Activated CD8-positive, alpha-beta memory T cell treated with anti-CD3 and anti-CD28 coated beads, Interleukin-2, amount 10 ng/mL, durations not matched to agents 7 days and 5 days (primary cell): ENCODE measurements at regions of chr3 and their contacts with region 1.

Region 1: DNA sequence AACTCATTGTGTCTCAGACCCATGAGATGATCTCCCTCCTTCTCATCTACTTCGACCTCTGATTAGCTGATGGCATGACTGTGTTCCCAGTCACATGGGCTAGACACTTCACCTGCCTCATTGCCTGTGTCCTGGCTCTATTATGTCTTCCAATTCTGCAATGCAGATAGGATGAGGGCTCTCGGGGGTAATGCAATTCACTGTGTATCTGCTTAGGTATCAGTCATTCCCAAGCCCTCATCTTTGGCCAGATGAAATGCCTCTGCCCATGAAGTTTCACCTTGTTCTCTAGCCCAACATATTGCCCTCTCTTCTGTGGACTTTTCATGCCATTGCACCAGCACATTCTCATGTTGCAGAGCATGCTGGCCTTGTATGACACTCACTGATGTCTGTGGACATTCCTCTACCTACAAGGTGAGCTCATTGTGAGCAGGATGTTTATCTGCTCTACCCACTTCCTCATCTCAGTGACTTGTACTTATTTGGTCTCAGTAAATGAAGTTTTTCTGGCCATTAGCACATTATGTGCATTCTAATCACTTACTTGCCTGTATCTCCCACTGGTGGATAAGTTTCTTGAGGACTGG is 32.3 kb downstream of the MOBP start:
- DNase-seq: no peak
- ATAC-seq: no peak
- H3K4me3 Mint-ChIP-seq: no peak overlapping the region
- H3K27ac Mint-ChIP-seq: no peak overlapping the region
- H3K4me1 Mint-ChIP-seq: peaks cover 8% of the 10 kb centered on the region
- H3K27me3 Mint-ChIP-seq: peaks cover 47% of the 10 kb centered on the region

Region 2: DNA sequence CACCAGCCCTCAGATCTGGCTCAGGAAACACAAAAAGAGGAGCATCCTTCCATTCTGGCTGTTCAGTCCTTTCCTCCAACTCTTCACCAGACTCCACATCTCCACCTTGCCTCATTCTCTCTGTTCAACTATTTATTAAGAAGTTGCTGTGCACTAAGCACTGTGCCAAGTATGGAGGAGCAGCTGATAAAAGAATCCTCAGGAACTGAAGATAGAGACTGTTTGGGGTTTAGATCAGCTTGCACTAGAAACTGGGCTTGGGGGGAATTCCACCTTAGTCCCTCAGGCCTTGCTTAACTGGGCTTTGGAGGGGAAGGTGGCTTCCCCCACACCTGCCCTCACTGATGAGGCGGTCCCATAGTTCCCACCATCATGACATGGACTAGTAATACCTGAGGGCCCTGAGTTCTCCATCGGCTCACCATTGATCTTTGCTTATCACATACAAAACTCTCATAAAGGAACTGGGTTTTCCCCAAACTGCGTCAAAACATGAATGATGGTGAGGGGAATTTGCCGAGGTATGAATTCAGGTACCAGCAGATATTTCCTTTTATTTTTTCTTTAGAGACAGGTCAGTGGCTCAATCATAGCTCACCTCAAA is 171.9 kb before region 1 on chr3:
- CTCF ChIA-PET with region 1: no interaction called
- DNase-seq: no peak
- ATAC-seq: no peak
- H3K4me3 Mint-ChIP-seq: no peak overlapping the region
- H3K27ac Mint-ChIP-seq: peak overlapping the region; percentile 72
- H3K4me1 Mint-ChIP-seq: peaks cover 77% of the 10 kb centered on the region
- H3K27me3 Mint-ChIP-seq: no peaks in the 10 kb centered on the region

Region 3: DNA sequence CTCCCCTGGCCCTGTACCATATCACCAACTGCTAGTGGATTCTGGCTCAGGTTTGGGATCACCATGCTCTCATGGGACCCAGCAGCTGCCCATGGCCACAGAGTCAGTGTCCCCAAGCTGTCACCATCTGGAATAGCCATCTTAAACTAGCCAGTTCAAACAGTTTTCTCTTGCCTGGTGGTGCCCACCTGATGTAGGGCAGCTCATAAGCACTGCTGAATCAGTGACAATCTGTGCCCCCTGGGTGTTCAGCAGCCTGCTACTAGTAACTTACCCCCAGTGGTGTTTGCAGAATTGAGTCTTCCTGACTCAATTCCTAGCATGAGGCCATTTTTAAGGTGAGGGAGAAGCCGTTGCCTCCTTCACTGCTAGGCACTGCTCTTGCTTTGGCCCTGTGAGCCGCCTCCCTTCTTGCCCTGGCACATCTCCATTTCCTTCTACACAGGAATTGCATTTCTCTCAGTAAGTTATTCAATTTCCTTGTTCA is 85.3 kb before region 1 on chr3:
- CTCF ChIA-PET with region 1: interaction called, 10 read pairs
- DNase-seq: no peak
- ATAC-seq: no peak
- H3K4me3 Mint-ChIP-seq: no peak overlapping the region
- H3K27ac Mint-ChIP-seq: peak overlapping the region; percentile 5
- H3K4me1 Mint-ChIP-seq: peaks cover 21% of the 10 kb centered on the region
- H3K27me3 Mint-ChIP-seq: no peaks in the 10 kb centered on the region

Region 4: DNA sequence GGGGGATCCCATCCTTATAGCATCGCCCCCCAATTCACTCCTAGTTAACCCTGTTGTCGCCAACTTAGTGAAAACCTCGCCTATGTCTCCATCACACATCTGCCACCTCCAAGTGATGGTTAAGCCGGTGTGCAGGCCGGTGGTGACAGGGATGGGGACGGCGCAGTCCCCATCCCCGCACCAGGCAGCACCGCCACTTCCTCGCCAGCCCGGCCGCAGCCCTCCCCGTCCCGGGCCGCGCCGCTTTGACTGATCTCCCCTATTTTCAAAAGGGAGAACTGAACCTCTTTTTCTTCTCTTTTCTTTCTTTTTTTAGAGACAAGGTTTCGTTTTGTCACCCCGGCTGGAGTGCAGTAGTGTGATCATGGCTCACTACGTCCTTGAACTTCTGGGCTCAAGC is 43.6 kb before region 1 on chr3:
- CTCF ChIA-PET with region 1: no interaction called
- DNase-seq: no peak
- ATAC-seq: no peak
- H3K4me3 Mint-ChIP-seq: no peak overlapping the region
- H3K27ac Mint-ChIP-seq: no peak overlapping the region
- H3K4me1 Mint-ChIP-seq: no peaks in the 10 kb centered on the region
- H3K27me3 Mint-ChIP-seq: peaks cover 32% of the 10 kb centered on the region